ENCODE measurements at regions of chr14 and their contacts with region 1.

Region 1: GRCh38 chr14:67943947-67944346 is 124.4 kb downstream of the RAD51B start:
- DNase-seq: peak; percentile 93
- ATAC-seq: peak; percentile 29; the same call in 1 of the 2 replicates
- H3K4me3 ChIP-seq: no peak overlapping the region
- H3K27ac ChIP-seq: 0 out of 2 replicates have a peak overlapping the region, but pooled peaks have one; percentile 1
- H3K4me1 ChIP-seq: peaks cover 34% of the 10 kb centered on the region
- H3K27me3 ChIP-seq: no peaks in the 10 kb centered on the region
- CTCF ChIP-seq: peak; percentile 96

Region 2: DNA sequence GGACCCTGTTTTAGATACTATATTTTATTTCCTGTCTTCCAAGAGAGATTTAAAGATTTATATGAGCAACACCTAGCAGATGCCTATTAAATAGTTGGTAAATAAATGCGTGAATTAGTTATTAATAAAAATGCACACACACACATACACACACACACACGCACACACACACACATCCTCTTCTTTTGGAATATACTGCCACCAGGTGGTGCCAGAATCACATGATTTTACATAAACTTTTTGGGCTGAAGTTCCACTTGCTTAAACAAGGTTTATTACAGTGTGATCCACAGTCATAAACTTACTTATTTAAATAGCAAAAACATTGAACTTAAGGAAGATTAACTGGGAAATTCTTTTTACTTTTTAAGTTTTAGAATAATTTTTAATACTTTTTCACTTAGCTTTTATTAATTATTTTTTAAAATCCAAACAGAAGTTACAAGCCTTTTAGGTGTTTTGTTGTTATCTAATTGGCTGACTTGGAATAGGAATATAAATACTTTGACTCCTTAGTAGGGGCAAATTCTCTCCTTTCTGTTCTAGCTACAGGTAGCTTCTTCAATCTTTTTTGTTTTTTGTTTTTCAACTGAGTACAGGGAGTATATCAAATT is 106.8 kb before region 1 on chr14:
- CTCF ChIA-PET with region 1: no interaction called
- POLR2A ChIA-PET with region 1: no interaction called
- intact Hi-C with region 1: no loop called
- DNase-seq: peak; percentile 86
- ATAC-seq: peak; percentile 82
- H3K4me3 ChIP-seq: no peak overlapping the region
- H3K27ac ChIP-seq: no peak overlapping the region
- H3K4me1 ChIP-seq: peaks cover 7% of the 10 kb centered on the region; the same call in 1 of the 2 replicates
- H3K27me3 ChIP-seq: no peaks in the 10 kb centered on the region
- CTCF ChIP-seq: peak; percentile 93

Region 3: GRCh38 chr14:67999693-68000384 is 55.9 kb after region 1 on chr14:
- CTCF ChIA-PET with region 1: no interaction called
- POLR2A ChIA-PET with region 1: interaction called, 16 read pairs
- intact Hi-C with region 1: no loop called
- DNase-seq: peak; percentile 92
- ATAC-seq: peak; percentile 99
- H3K4me3 ChIP-seq: peak overlapping the region; percentile 60
- H3K27ac ChIP-seq: peak overlapping the region; percentile 64
- H3K4me1 ChIP-seq: peaks cover 20% of the 10 kb centered on the region
- H3K27me3 ChIP-seq: no peaks in the 10 kb centered on the region
- CTCF ChIP-seq: no peak

Region 4: GRCh38 chr14:68084256-68084655 is 140.3 kb after region 1 on chr14:
- CTCF ChIA-PET with region 1: no interaction called
- POLR2A ChIA-PET with region 1: no interaction called
- intact Hi-C with region 1: loop called (anchors 5 kb)
- DNase-seq: peak; percentile 37
- ATAC-seq: peak; percentile 48
- H3K4me3 ChIP-seq: no peak overlapping the region
- H3K27ac ChIP-seq: no peak overlapping the region
- H3K4me1 ChIP-seq: no peaks in the 10 kb centered on the region
- H3K27me3 ChIP-seq: no peaks in the 10 kb centered on the region
- CTCF ChIP-seq: peak; percentile 71

Region 5: DNA sequence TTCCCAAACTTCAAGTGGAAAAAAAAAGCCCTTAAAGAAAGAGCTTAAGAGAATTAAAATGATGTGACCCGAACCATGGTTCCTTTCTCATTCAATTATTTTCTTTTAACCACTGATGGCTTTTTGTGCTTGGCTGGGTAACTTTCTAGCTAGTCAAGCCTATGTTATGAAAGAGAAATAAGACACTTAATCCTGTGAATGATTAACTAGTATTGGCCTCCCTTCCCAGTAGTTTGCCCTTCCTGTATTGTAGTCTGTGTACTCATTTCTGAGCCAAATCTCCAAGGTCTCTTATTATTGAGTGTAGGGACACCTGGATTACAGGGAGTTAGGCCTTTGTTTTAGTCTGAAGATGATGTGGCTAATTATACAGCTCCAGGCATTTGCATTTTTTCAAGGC is 228.7 kb after region 1 on chr14:
- CTCF ChIA-PET with region 1: interaction called, 11 read pairs
- POLR2A ChIA-PET with region 1: no interaction called
- intact Hi-C with region 1: no loop called
- DNase-seq: peak; percentile 83
- ATAC-seq: peak; percentile 91
- H3K4me3 ChIP-seq: no peak overlapping the region
- H3K27ac ChIP-seq: peak overlapping the region; percentile 69
- H3K4me1 ChIP-seq: peaks cover 49% of the 10 kb centered on the region
- H3K27me3 ChIP-seq: no peaks in the 10 kb centered on the region
- CTCF ChIP-seq: no peak

Region 6: GRCh38 chr14:68359837-68360552 is 416.0 kb after region 1 on chr14:
- CTCF ChIA-PET with region 1: no interaction called
- POLR2A ChIA-PET with region 1: no interaction called
- intact Hi-C with region 1: loop called (anchors 5 kb)
- DNase-seq: peak; percentile 28
- ATAC-seq: peak; percentile 62
- H3K4me3 ChIP-seq: no peak overlapping the region
- H3K27ac ChIP-seq: no peak overlapping the region
- H3K4me1 ChIP-seq: peaks cover 29% of the 10 kb centered on the region
- H3K27me3 ChIP-seq: no peaks in the 10 kb centered on the region
- CTCF ChIP-seq: no peak

Region 7: GRCh38 chr14:68598621-68599447 is 654.9 kb after region 1 on chr14:
- CTCF ChIA-PET with region 1: no interaction called
- POLR2A ChIA-PET with region 1: interaction called, 3 read pairs
- intact Hi-C with region 1: loop called (anchors 5 kb)
- DNase-seq: peak; percentile 97
- ATAC-seq: peak; percentile 92
- H3K4me3 ChIP-seq: peak overlapping the region; percentile 60
- H3K27ac ChIP-seq: peak overlapping the region; percentile 99
- H3K4me1 ChIP-seq: peaks cover 27% of the 10 kb centered on the region
- H3K27me3 ChIP-seq: no peaks in the 10 kb centered on the region
- CTCF ChIP-seq: no peak